CD8-positive, alpha-beta T cell (primary cell): ENCODE measurements at regions of chr2 and their contacts with region 1.

Region 1: GRCh38 chr2:85288244-85288725 is 39.5 kb downstream of the TGOLN2 start:
- DNase-seq: no peak
- ATAC-seq: no peak
- H3K4me3 ChIP-seq: no peak overlapping the region
- H3K4me3 Mint-ChIP-seq: no peak overlapping the region
- H3K27ac ChIP-seq: no peak overlapping the region
- H3K27ac Mint-ChIP-seq: no peak overlapping the region
- H3K4me1 ChIP-seq: peaks cover 15% of the 10 kb centered on the region
- H3K4me1 Mint-ChIP-seq: peaks cover 23% of the 10 kb centered on the region
- H3K27me3 ChIP-seq: no peaks in the 10 kb centered on the region
- H3K27me3 Mint-ChIP-seq: no peaks in the 10 kb centered on the region
- CTCF ChIP-seq: no peak

Region 2: DNA sequence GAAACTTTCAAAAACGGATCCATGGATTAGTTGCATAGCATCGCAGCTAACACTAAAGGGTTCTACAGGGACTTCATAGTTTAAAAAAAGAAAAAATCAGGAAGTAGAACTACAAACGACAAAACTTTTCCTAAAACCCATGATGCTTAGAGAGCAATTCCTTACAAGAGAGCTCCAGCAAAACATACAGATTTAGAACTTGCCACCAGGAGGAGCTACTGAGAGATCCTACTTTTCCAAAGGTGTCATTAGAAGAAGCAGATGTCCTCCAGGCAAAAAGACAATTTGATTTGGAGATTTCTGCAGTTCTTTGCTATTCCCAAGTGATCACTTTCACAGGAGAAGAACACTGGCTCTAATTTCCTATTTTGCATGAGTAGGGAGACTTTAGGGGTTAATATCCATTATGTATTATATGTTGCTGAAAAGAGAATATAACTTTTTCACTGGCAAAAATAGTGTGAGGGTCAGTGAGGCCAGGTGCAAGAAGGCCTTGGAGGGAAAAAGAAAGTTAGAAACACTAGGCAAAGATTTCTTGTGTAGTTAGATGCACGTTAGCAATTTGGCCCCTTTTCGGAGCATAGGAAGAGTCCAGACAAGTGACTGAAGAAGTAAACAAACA is 1265.4 kb before region 1 on chr2:
- CTCF ChIA-PET with region 1: no interaction called
- POLR2A ChIA-PET with region 1: no interaction called
- intact Hi-C with region 1: loop called in 1 of 2 experiments (anchors 5 kb)
- DNase-seq: peak in 2 of 9 experiments; percentile 32 to 44
- ATAC-seq: no peak
- H3K4me3 ChIP-seq: no peak overlapping the region
- H3K4me3 Mint-ChIP-seq: no peak overlapping the region
- H3K27ac ChIP-seq: no peak overlapping the region
- H3K27ac Mint-ChIP-seq: no peak overlapping the region
- H3K4me1 ChIP-seq: no peaks in the 10 kb centered on the region
- H3K4me1 Mint-ChIP-seq: no peaks in the 10 kb centered on the region
- H3K27me3 ChIP-seq: no peaks in the 10 kb centered on the region
- H3K27me3 Mint-ChIP-seq: peaks cover 7% of the 10 kb centered on the region
- CTCF ChIP-seq: peak; percentile 47

Region 3: GRCh38 chr2:84314901-84315330 is 973.4 kb before region 1 on chr2:
- CTCF ChIA-PET with region 1: no interaction called
- POLR2A ChIA-PET with region 1: no interaction called
- intact Hi-C with region 1: no loop called
- DNase-seq: peak; percentile 50 to 76 (median 71)
- ATAC-seq: peak; percentile 65
- H3K4me3 ChIP-seq: no peak overlapping the region
- H3K4me3 Mint-ChIP-seq: no peak overlapping the region
- H3K27ac ChIP-seq: no peak overlapping the region
- H3K27ac Mint-ChIP-seq: no peak overlapping the region
- H3K4me1 ChIP-seq: no peaks in the 10 kb centered on the region
- H3K4me1 Mint-ChIP-seq: peaks cover 3% of the 10 kb centered on the region
- H3K27me3 ChIP-seq: no peaks in the 10 kb centered on the region
- H3K27me3 Mint-ChIP-seq: peaks cover 15% of the 10 kb centered on the region
- CTCF ChIP-seq: peak; percentile 72

Region 4: DNA sequence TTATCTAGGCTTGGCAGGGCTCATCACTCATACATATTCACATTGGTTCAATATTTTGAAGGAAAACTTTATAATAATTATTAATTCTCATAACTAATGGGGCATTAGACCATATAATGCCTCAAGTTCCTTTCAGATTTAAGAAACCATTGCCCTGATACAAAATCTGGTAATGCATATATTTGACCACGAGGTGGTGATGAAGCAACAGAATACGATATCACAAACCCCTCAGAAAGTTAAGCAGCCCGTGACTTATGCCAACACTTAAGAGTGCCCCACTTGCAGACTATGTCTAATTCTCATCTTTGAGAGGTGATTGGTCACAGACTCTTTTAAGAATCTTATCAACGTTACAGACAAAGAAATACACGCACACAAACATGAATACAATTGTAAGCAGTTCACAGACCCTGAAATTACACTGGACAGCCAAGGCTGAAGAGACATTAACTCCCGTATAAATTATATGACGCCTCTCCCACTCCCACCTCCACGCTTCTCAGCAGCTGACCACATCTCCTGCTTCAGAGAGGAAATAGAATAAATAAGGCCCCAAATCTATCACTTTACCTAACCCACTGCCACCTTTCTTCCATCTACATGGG is 792.6 kb before region 1 on chr2:
- CTCF ChIA-PET with region 1: interaction called, 4 read pairs
- POLR2A ChIA-PET with region 1: no interaction called
- intact Hi-C with region 1: loop called (anchors 2 to 5 kb)
- DNase-seq: peak in 6 of 9 experiments; percentile 22 to 87 (median 40)
- ATAC-seq: peak; percentile 99
- H3K4me3 ChIP-seq: no peak overlapping the region
- H3K4me3 Mint-ChIP-seq: no peak overlapping the region
- H3K27ac ChIP-seq: no peak overlapping the region
- H3K27ac Mint-ChIP-seq: peak overlapping the region; percentile 30
- H3K4me1 ChIP-seq: peaks cover 5% of the 10 kb centered on the region
- H3K4me1 Mint-ChIP-seq: peaks cover 18% of the 10 kb centered on the region
- H3K27me3 ChIP-seq: no peaks in the 10 kb centered on the region
- H3K27me3 Mint-ChIP-seq: no peaks in the 10 kb centered on the region
- CTCF ChIP-seq: peak; percentile 81

Region 5: DNA sequence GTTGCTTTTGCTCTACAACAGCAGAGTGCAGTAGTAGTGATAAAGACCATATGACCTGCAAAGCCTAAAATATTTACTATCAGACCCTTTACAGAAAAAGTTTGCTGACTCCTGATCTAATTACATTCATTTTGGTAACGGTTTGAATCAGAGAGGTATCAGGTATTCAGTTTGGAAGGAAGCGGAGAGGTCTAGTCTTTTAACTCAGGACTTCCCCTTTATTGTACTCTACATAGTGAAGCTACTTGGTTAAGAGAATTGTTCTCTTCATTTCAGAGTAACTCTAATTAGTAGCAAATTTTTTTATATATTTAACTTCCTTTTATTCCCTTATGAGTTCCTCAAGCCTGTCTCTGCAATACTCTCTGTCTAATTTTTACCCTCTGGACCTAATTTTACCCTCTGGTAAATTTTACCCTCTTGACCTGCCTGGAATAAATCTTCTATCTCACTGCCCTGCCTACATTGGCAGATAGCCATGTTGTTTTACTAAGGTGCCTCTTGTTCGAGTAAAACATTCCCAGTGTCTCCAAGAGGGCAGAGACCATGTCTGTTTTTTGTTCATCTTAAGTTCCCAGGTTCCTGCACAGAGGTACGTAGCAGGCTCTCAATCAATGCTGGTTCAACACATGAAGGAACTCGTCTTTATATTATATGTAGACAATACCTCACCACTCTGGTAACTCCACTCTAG is 601.4 kb before region 1 on chr2:
- CTCF ChIA-PET with region 1: no interaction called
- POLR2A ChIA-PET with region 1: no interaction called
- intact Hi-C with region 1: no loop called
- DNase-seq: peak in 1 of 9 experiments; percentile 38
- ATAC-seq: peak; percentile 42
- H3K4me3 ChIP-seq: no peak overlapping the region
- H3K4me3 Mint-ChIP-seq: peak overlapping the region; percentile 38
- H3K27ac ChIP-seq: no peak overlapping the region
- H3K27ac Mint-ChIP-seq: peak overlapping the region; percentile 85
- H3K4me1 ChIP-seq: peaks cover 36% of the 10 kb centered on the region
- H3K4me1 Mint-ChIP-seq: peaks cover 51% of the 10 kb centered on the region
- H3K27me3 ChIP-seq: no peaks in the 10 kb centered on the region
- H3K27me3 Mint-ChIP-seq: no peaks in the 10 kb centered on the region
- CTCF ChIP-seq: no peak

Region 6: DNA sequence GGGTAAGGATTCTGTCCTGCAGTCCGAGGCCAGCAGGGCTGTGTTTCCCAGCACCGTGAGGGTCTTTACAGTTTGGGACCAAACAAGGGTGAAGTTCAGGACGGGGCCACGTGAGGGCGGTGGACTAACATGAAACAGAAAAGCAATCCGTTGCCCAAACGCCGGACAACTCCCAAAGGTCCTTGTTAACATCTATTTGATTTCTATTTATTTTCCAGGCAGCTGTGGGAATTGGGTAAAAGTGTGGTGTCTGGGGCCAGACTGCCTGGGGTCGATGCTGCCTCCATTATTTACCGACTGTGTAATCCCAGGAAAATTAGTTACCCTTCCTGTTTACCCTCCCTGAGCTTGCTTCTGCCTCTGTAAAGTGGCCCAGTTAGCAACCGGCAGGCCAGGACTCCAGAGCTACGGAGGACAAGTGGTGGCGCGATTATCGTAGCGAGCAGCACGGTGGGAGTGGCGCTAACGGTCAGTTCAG is 221.4 kb before region 1 on chr2:
- CTCF ChIA-PET with region 1: no interaction called
- POLR2A ChIA-PET with region 1: no interaction called
- intact Hi-C with region 1: loop called in 1 of 2 experiments (anchors 5 kb)
- DNase-seq: peak in 5 of 9 experiments; percentile 22 to 50 (median 31)
- ATAC-seq: no peak
- H3K4me3 ChIP-seq: no peak overlapping the region
- H3K4me3 Mint-ChIP-seq: no peak overlapping the region
- H3K27ac ChIP-seq: no peak overlapping the region
- H3K27ac Mint-ChIP-seq: no peak overlapping the region
- H3K4me1 ChIP-seq: peaks cover 7% of the 10 kb centered on the region
- H3K4me1 Mint-ChIP-seq: peaks cover 3% of the 10 kb centered on the region
- H3K27me3 ChIP-seq: no peaks in the 10 kb centered on the region
- H3K27me3 Mint-ChIP-seq: peaks cover 19% of the 10 kb centered on the region
- CTCF ChIP-seq: peak; percentile 39

Region 7: GRCh38 chr2:85266146-85267041 is 21.9 kb before region 1 on chr2:
- CTCF ChIA-PET with region 1: interaction called, 55 read pairs
- POLR2A ChIA-PET with region 1: no interaction called
- intact Hi-C with region 1: loop called (anchors 1 kb)
- DNase-seq: peak; percentile 31 to 79 (median 74)
- ATAC-seq: no peak
- H3K4me3 ChIP-seq: no peak overlapping the region
- H3K4me3 Mint-ChIP-seq: no peak overlapping the region
- H3K27ac ChIP-seq: no peak overlapping the region
- H3K27ac Mint-ChIP-seq: no peak overlapping the region
- H3K4me1 ChIP-seq: no peaks in the 10 kb centered on the region
- H3K4me1 Mint-ChIP-seq: no peaks in the 10 kb centered on the region
- H3K27me3 ChIP-seq: no peaks in the 10 kb centered on the region
- H3K27me3 Mint-ChIP-seq: peaks cover 8% of the 10 kb centered on the region
- CTCF ChIP-seq: peak; percentile 89

Region 8: DNA sequence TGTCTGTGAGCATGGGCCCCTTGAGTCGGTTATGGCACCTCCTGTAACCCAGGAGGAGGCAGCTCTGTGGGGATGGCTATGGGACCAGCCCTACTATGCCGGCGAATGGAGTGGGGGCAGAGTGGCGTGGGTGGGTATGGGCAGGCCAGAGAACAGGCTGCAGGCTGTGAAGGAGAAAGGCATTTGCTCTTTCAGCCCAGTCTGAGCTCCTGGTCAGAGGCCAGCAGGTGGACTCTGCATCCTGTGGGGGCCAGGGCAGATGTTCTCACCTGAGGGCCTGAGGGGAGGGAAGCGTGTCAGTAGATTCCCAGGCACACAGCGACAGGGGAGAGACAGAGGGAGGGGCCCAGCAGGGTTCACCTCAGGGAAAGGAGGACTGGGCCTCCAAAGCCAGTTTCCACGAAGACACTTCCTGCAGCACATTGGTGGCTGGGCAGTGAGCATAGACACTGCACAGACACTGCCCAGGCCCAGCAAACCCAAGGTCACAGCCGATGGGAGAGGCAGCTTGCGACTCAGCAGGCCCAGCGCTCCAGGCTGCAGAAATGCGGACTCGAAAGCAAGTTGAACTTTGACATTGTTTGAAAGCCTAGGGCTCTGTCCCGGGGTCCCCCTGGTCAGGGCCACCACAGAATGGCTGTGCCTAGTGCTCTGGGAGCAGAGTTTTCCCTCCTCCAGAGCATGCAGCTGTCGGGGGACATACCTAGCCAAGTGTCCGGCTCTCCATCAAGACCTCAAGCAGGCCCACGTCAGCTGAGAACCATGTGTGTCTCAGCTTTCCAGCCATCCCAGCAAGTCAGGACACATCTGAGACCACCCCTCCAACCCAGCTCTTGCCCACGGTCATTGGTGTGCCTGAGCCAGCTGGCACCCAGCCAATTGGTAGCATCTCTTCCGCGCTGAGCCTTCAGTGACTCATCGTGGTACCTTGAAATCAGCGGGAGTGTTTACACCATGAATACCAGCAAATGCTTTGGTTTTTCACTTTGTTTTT is 14.2 kb before region 1 on chr2:
- CTCF ChIA-PET with region 1: interaction called, 55 read pairs
- POLR2A ChIA-PET with region 1: no interaction called
- intact Hi-C with region 1: no loop called
- DNase-seq: no peak
- ATAC-seq: no peak
- H3K4me3 ChIP-seq: no peak overlapping the region
- H3K4me3 Mint-ChIP-seq: no peak overlapping the region
- H3K27ac ChIP-seq: no peak overlapping the region
- H3K27ac Mint-ChIP-seq: no peak overlapping the region
- H3K4me1 ChIP-seq: no peaks in the 10 kb centered on the region
- H3K4me1 Mint-ChIP-seq: no peaks in the 10 kb centered on the region
- H3K27me3 ChIP-seq: no peaks in the 10 kb centered on the region
- H3K27me3 Mint-ChIP-seq: peaks cover 22% of the 10 kb centered on the region
- CTCF ChIP-seq: no peak

Region 9: GRCh38 chr2:85302121-85302520 is 13.8 kb after region 1 on chr2:
- CTCF ChIA-PET with region 1: interaction called, 128 read pairs
- POLR2A ChIA-PET with region 1: interaction called, 4 read pairs
- intact Hi-C with region 1: loop called in 1 of 2 experiments (anchors 1 kb)
- DNase-seq: no peak
- ATAC-seq: no peak
- H3K4me3 ChIP-seq: no peak overlapping the region
- H3K4me3 Mint-ChIP-seq: no peak overlapping the region
- H3K27ac ChIP-seq: no peak overlapping the region
- H3K27ac Mint-ChIP-seq: no peak overlapping the region
- H3K4me1 ChIP-seq: no peaks in the 10 kb centered on the region
- H3K4me1 Mint-ChIP-seq: peaks cover 15% of the 10 kb centered on the region
- H3K27me3 ChIP-seq: no peaks in the 10 kb centered on the region
- H3K27me3 Mint-ChIP-seq: peaks cover 5% of the 10 kb centered on the region
- CTCF ChIP-seq: no peak